AG04449 (cell line): ENCODE measurements at regions of chr3 and their contacts with region 1.

Region 1: DNA sequence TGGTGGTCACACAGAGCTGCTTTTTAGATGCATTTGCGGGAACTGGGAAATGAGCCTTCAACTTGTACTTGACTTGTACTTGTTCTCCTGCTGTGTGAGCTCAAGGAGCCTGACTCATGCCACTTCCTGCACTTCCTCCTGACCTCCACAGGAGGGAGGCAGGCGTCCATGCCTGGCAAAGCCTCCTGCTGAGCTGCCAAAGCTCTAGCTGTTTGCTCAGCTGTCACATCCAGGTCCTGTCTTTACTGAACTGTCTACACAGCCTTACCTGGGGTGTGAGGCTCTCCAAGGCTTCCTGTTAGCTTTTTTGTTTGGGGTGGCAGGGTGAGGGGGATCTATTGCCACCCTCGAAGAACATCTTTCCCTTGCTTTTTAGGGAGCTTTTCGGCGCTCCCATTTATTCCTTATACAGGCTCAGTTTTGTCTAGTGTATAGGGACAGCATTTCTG is 6.4 kb downstream of the THPO start:
- DNase-seq: peak; percentile 59
- H3K4me3 ChIP-seq: no peak overlapping the region
- CTCF ChIP-seq: peak; percentile 99

Region 2: GRCh38 chr3:184314363-184314699 is 57.3 kb before region 1 on chr3 and contains the start of gene EIF4G1:
- CTCF ChIA-PET with region 1: no interaction called
- POLR2A ChIA-PET with region 1: no interaction called
- DNase-seq: no peak
- H3K4me3 ChIP-seq: peak within 1 kb of the TSS; percentile 90
- CTCF ChIP-seq: no peak

Region 3: DNA sequence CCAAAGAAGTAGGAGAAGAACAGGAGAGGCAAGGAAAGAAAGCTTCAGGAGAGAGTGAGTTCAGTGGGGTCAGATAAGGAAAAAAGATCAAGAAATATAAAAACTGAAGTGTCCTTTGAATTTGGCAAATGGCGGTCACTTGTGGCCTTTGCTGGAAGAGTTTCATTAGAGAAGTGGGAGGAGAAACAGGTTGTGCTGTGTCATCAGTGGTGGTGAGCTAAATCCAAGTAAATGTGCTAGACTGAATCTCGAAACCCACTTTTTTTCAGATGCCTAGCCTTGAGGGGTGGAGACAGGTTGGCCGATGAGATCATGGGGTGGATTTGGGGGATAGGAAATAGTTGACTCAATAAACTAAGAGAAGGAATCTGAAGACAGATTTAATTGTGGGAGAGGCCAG is 52.0 kb after region 1 on chr3:
- CTCF ChIA-PET with region 1: interaction called, 18 read pairs
- POLR2A ChIA-PET with region 1: no interaction called
- DNase-seq: no peak
- H3K4me3 ChIP-seq: no peak overlapping the region
- CTCF ChIP-seq: no peak

Region 4: GRCh38 chr3:184474897-184475296 is 103.3 kb after region 1 on chr3:
- CTCF ChIA-PET with region 1: interaction called, 81 read pairs
- POLR2A ChIA-PET with region 1: interaction called, 4 read pairs
- DNase-seq: no peak
- H3K4me3 ChIP-seq: no peak overlapping the region
- CTCF ChIP-seq: no peak

Region 5: DNA sequence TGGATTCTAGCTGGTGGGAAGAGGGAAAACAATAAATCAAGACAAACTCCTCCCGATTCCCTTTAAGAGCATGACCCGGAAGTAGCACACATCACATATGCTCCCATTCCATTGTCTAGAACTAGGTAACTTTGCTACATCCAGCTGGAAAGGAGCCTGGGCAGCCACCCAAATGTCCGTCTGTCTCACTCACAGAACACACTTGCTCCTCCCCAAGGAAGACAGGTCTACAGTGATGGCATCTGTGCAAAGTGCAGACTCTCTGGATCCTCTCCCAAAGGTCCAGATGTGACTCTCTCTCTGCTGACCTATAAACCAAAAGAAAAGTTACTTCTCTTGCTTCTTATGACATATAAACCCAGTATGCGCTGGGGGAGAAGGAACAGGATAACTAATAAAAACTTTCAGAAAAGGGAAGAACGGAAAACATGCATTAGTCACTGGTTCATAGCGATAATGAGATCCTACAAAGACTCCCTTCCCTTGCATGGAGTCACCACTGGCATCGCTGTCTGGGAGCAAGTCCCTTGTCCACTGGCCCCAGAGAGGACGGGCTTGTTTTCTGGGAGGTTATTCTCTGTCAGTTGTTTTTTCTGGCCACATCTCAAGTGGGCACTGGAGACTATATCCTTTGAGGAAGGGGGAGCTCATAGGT is 160.2 kb after region 1 on chr3:
- CTCF ChIA-PET with region 1: interaction called, 469 read pairs
- POLR2A ChIA-PET with region 1: no interaction called
- DNase-seq: no peak
- H3K4me3 ChIP-seq: no peak overlapping the region
- CTCF ChIP-seq: no peak

Region 6: GRCh38 chr3:184561061-184561912 is 189.7 kb after region 1 on chr3 and contains the start of gene EPHB3:
- CTCF ChIA-PET with region 1: interaction called, 12 read pairs
- POLR2A ChIA-PET with region 1: interaction called, 3 read pairs
- DNase-seq: peak; percentile 91
- H3K4me3 ChIP-seq: peak within 1 kb of the TSS; percentile 72
- CTCF ChIP-seq: peak; percentile 100